CD8-positive, alpha-beta T cell (primary cell): ENCODE measurements at regions of chr5 and their contacts with region 1.

Region 1: GRCh38 chr5:82278095-82278918 is at the start of gene RPS23:
- DNase-seq: peak; percentile 73 to 94 (median 86)
- ATAC-seq: peak; percentile 95
- H3K4me3 ChIP-seq: peak within 1 kb of the TSS; percentile 63 to 94
- H3K4me3 Mint-ChIP-seq: peak within 1 kb of the TSS; percentile 97
- H3K27ac ChIP-seq: peak within 1 kb of the TSS; percentile 71 to 84
- H3K27ac Mint-ChIP-seq: peak within 1 kb of the TSS; percentile 96
- H3K4me1 ChIP-seq: peaks cover 18% of the 10 kb centered on the region
- H3K4me1 Mint-ChIP-seq: peaks cover 44% of the 10 kb centered on the region
- H3K27me3 ChIP-seq: no peaks in the 10 kb centered on the region
- H3K27me3 Mint-ChIP-seq: no peaks in the 10 kb centered on the region
- CTCF ChIP-seq: no peak
- total RNA-seq, gene RPS23: 3,866 to 4,021 TPM

Region 2: GRCh38 chr5:82356808-82357671 is 78.7 kb after region 1 on chr5:
- CTCF ChIA-PET with region 1: no interaction called
- POLR2A ChIA-PET with region 1: interaction called, 3 read pairs
- intact Hi-C with region 1: loop called in 1 of 2 experiments (anchors 1 kb)
- DNase-seq: peak; percentile 44 to 90 (median 74)
- ATAC-seq: peak; percentile 83
- H3K4me3 ChIP-seq: peak overlapping the region in 1 of 2 experiments; percentile 9
- H3K4me3 Mint-ChIP-seq: peak overlapping the region; percentile 77
- H3K27ac ChIP-seq: peak overlapping the region; percentile 29 to 53
- H3K27ac Mint-ChIP-seq: peak overlapping the region; percentile 97
- H3K4me1 ChIP-seq: peaks cover 13% of the 10 kb centered on the region
- H3K4me1 Mint-ChIP-seq: peaks cover 24% of the 10 kb centered on the region
- H3K27me3 ChIP-seq: no peaks in the 10 kb centered on the region
- H3K27me3 Mint-ChIP-seq: no peaks in the 10 kb centered on the region
- CTCF ChIP-seq: no peak